Activated CD4-positive, alpha-beta T cell treated with anti-CD3 and anti-CD28 coated beads for 36 hours (primary cell): ENCODE measurements at regions of chr3 and their contacts with region 1.

Region 1: DNA sequence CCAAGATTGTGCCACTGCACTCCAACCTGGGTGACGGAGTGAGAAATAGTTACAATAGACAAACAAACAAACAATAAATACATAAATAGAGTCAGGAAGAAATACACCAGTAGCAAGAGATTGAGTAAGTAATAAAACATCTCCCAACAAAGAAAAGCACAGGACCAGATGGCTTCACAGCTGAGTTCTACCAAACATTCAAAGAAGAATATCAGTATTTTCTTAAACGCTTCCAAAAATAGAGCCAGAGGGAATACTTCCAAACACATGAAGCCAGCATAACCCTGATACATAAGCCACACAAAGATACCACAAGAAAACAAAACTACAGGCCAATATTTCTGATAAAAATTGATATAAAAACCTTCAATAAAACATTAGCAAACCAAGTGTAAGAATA is 30.7 kb upstream of the IGSF10 start:
- DNase-seq: no peak
- ATAC-seq: no peak
- H3K4me3 Mint-ChIP-seq: no peak overlapping the region
- H3K27ac Mint-ChIP-seq: no peak overlapping the region
- H3K4me1 Mint-ChIP-seq: no peaks in the 10 kb centered on the region
- H3K27me3 Mint-ChIP-seq: peaks cover 5% of the 10 kb centered on the region

Region 2: GRCh38 chr3:151379083-151379734 is 112.3 kb before region 1 on chr3:
- CTCF ChIA-PET with region 1: no interaction called
- POLR2A ChIA-PET with region 1: no interaction called
- intact Hi-C with region 1: no loop called
- DNase-seq: peak; percentile 27
- ATAC-seq: no peak
- H3K4me3 Mint-ChIP-seq: no peak overlapping the region
- H3K27ac Mint-ChIP-seq: no peak overlapping the region
- H3K4me1 Mint-ChIP-seq: no peaks in the 10 kb centered on the region
- H3K27me3 Mint-ChIP-seq: peaks cover 2% of the 10 kb centered on the region

Region 3: DNA sequence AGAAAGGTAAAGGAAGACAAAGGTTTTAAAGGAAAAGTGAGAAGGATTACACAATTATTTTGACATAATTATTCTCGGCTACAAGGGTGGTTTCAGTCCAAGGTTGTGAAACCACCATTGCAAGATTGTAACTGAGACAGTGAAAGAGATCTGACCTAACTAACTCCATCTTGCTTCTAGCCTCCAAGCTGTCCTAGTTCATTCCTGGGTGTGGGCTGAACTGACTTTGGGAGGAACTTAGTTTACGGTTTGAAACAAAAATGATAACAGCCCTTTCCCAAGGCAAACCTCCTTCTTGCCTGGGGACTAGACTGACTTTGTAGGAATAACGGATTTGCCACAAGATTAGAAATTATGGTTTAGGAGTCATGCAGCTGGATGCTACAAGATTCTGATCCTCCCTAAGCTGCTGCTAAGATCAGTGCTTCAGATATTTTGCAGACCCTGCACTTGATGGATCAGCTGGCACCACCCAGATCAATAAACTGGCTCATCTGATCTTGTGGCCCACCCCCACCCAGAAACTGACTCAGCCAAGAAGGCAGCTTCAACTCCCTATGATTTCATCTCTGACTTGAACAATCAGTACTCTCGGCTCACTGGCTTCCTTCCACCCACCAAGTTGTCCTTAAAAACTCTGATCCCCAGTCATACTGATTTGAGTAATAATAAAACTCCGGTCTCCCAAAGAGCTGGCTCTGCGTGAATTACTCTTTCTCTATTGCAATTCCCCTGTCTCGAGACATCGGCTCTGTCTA is 184.5 kb after region 1 on chr3:
- CTCF ChIA-PET with region 1: no interaction called
- POLR2A ChIA-PET with region 1: no interaction called
- intact Hi-C with region 1: loop called in 1 of 2 experiments (anchors 5 kb)
- DNase-seq: no peak
- ATAC-seq: no peak
- H3K4me3 Mint-ChIP-seq: no peak overlapping the region
- H3K27ac Mint-ChIP-seq: no peak overlapping the region
- H3K4me1 Mint-ChIP-seq: no peaks in the 10 kb centered on the region
- H3K27me3 Mint-ChIP-seq: peaks cover 2% of the 10 kb centered on the region